Esophagus squamous epithelium (tissue), 5 donors: ENCODE measurements at regions of chr17 and their contacts with region 1.

Region 1: GRCh38 chr17:50094753-50095619 is at the start of gene PDK2:
- DNase-seq: peak; percentile 90
- H3K4me3 ChIP-seq: peak within 1 kb of the TSS; percentile 57 to 98 (median 79)
- H3K27ac ChIP-seq: peak within 1 kb of the TSS; percentile 80 to 94 (median 88)
- H3K4me1 ChIP-seq: peaks cover 16 to 40% (median 17%) of the 10 kb centered on the region in 3 donors
- H3K27me3 ChIP-seq: no peaks in the 10 kb centered on the region
- CTCF ChIP-seq: peak in 1 of 6 experiments; percentile 21
- POLR2A ChIP-seq: peak in 2 of 4 donors; percentile 52 to 63
- total RNA-seq, gene PDK2: 5.2 to 20.2 (median 12.8) TPM

Region 2: DNA sequence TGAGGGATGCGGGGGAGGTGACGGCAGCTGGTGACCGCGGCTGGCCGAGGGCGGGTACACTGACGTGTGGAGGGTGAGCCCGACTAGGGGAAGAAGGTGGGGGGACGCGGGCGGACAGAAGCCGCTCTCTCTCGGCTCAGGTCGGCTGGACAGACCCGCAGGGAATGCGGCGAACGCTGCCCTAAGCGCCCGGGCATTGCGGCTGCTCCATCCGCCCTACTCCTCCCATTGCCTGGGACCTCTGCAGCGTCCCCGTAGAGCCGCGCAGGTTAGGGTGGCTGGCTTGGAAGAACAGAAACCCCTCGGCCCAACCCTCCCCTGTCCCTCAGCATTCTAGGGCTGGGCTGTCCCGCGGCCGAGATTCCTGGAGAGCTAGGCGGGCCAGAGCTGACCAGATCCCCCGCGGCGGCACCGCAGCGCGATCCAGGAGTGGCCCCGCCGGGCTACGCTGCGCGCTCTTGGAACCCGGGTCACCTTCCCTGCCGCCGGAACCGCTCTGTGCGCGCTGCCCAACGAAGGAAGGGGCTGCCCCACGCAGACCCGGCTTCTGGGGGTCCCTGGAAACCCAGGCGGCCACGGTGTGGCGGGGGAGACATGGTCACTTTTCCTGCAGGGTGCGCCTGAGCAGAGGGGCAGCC is 123.0 kb before region 1 on chr17:
- intact Hi-C with region 1: no loop called
- DNase-seq: no peak
- H3K4me3 ChIP-seq: peak overlapping the region in 2 of 4 donors; percentile 28 to 47
- H3K27ac ChIP-seq: no peak overlapping the region
- H3K4me1 ChIP-seq: peaks cover 25 to 61% (median 29%) of the 10 kb centered on the region in 3 donors
- H3K27me3 ChIP-seq: peaks cover 9 to 100% (median 49%) of the 10 kb centered on the region in 4 donors
- CTCF ChIP-seq: no peak
- POLR2A ChIP-seq: no peak

Region 3: DNA sequence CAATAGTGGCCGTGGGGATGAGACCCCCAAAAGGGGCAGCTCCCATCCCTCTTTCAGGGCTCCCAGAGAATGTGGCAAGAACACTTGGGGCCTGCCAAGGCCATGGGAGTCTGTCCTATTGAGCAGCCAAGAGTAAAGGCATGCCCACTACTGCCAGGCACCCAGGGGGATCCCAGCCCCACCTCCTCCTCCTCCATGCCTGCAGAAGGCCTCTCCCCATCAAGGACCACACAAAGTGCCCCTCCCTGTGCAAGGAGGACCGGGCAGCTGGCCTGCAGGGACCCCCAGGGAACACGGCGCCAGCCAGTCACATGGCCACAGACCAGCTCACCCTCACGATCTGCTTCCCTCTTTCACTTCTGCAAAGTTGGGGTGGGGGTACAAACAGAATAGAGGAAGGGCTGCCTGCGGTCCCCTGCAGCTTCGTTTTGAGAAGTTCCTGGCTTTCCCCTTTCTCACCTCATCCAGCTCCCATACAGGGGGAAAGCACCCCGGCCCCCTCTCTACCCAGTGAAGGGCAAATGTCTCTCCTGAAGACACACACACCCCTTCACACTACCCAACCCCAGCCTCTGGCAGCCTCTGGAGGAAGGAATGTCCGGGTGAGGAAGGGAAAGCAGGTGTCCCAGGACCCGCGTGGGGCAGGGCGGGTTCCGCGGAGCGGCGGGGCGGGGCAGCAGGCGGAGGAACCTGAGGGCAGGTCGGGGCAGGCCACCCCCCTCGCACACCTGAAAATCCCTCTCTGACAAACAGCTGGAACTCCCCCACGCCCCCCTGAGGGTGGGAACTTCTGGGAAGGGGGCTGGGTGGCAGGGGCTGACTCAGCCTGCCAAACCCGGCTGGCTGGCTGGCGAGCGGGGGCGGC is 53.5 kb after region 1 on chr17:
- intact Hi-C with region 1: loop called (anchors 2 kb)
- DNase-seq: peak; percentile 61
- H3K4me3 ChIP-seq: peak overlapping the region; percentile 71 to 85 (median 82)
- H3K27ac ChIP-seq: peak overlapping the region; percentile 93 to 95 (median 94)
- H3K4me1 ChIP-seq: peaks cover 45 to 93% (median 53%) of the 10 kb centered on the region in 3 donors
- H3K27me3 ChIP-seq: no peaks in the 10 kb centered on the region
- CTCF ChIP-seq: peak in 1 of 6 experiments; percentile 40
- POLR2A ChIP-seq: peak in 1 of 4 donors; percentile 17